RWPE1 (cell line): ENCODE measurements at regions of chr16 and their contacts with region 1.

Region 1: DNA sequence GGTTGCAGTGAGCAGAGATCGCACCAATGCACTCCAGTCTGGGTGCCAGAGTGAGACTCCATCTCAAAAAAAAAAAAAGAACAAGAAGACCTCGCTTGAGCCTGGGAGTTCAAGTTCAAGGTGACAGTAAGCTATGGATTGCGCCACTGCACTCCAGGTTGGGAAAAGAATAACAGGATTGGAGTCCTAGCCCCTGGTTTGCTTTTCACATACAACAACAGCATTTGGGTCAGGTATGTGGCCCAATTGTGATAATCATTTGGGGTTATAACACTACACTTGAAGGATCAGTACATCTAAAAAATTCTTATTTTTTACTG is 3.4 kb upstream of the SEPHS2 start:
- DNase-seq: no peak
- H3K27ac ChIP-seq: no peak overlapping the region
- CTCF ChIP-seq: no peak

Region 2: GRCh38 chr16:30472328-30472942 is 23.4 kb after region 1 on chr16 and contains the start of gene ITGAL:
- CTCF ChIA-PET with region 1: no interaction called
- POLR2A ChIA-PET with region 1: no interaction called
- DNase-seq: no peak
- H3K27ac ChIP-seq: 0 out of 2 replicates have a peak within 1 kb of the TSS, but pooled peaks have one; percentile 7
- CTCF ChIP-seq: no peak

Region 3: GRCh38 chr16:30557957-30558788 is 109.1 kb after region 1 on chr16 and contains the start of gene ZNF764:
- CTCF ChIA-PET with region 1: interaction called, 11 read pairs
- POLR2A ChIA-PET with region 1: no interaction called
- DNase-seq: peak; percentile 95
- H3K27ac ChIP-seq: peak within 1 kb of the TSS; percentile 90
- CTCF ChIP-seq: no peak

Region 4: GRCh38 chr16:30740364-30741251 is 291.5 kb after region 1 on chr16:
- CTCF ChIA-PET with region 1: no interaction called
- POLR2A ChIA-PET with region 1: no interaction called
- DNase-seq: peak; percentile 99
- H3K27ac ChIP-seq: peak overlapping the region; percentile 88
- CTCF ChIP-seq: no peak